Activated CD4-positive, alpha-beta T cell treated with anti-CD3 and anti-CD28 coated beads, Interleukin-2, amount 10 ng/mL, durations not matched to agents 24 days and 14 days (primary cell): ENCODE measurements at regions of chr18 and their contacts with region 1.

Region 1: GRCh38 chr18:57841568-57841967 is 38.5 kb upstream of the ATP8B1 start:
- DNase-seq: peak; percentile 62
- H3K4me3 Mint-ChIP-seq: peak overlapping the region; percentile 50
- H3K27ac Mint-ChIP-seq: peak overlapping the region; percentile 55
- H3K4me1 Mint-ChIP-seq: peaks cover 24% of the 10 kb centered on the region
- H3K27me3 Mint-ChIP-seq: peaks cover 44% of the 10 kb centered on the region

Region 2: GRCh38 chr18:57803103-57803969 is 38.2 kb before region 1 on chr18 and contains the start of gene ATP8B1:
- intact Hi-C with region 1: loop called (anchors 5 kb)
- DNase-seq: no peak
- H3K4me3 Mint-ChIP-seq: peak within 1 kb of the TSS; percentile 81
- H3K27ac Mint-ChIP-seq: peak within 1 kb of the TSS; percentile 34
- H3K4me1 Mint-ChIP-seq: peaks cover 8% of the 10 kb centered on the region
- H3K27me3 Mint-ChIP-seq: peaks cover 66% of the 10 kb centered on the region
- total RNA-seq, gene ATP8B1: 0.24 TPM in 1 of 2 replicates, not detected in the other